Esophagus muscularis mucosa (tissue), 4 donors: ENCODE measurements at regions of chr5 and their contacts with region 1.

Region 1: DNA sequence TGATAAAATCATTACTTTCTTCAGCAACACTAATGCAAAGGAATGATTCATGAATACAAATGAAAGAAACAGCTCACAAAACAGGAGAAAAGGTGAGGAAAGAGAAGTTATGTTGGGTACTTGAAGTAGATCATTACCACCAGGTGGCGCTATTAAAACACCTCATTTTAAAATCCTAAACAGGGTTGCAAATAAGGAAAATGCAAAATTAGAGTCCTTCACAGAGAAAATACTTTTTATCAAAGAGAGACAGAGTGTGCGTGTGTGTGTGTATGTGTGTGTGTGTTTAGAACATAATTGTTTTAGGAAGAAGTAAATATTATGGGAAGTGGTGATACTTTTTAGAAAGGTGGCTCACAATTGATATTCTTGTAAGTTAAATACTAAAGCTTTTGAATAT is 49.5 kb upstream of the CD180 start:
- DNase-seq: no peak
- H3K4me3 ChIP-seq: no peak overlapping the region
- H3K27ac ChIP-seq: peak overlapping the region; percentile 40 to 83 (median 78)
- H3K4me1 ChIP-seq: peaks cover 27 to 68% (median 54%) of the 10 kb centered on the region in 4 donors
- H3K27me3 ChIP-seq: no peaks in the 10 kb centered on the region
- CTCF ChIP-seq: peak; percentile 68 to 81 (median 72)
- EP300 ChIP-seq: no peak
- POLR2A ChIP-seq: no peak

Region 2: DNA sequence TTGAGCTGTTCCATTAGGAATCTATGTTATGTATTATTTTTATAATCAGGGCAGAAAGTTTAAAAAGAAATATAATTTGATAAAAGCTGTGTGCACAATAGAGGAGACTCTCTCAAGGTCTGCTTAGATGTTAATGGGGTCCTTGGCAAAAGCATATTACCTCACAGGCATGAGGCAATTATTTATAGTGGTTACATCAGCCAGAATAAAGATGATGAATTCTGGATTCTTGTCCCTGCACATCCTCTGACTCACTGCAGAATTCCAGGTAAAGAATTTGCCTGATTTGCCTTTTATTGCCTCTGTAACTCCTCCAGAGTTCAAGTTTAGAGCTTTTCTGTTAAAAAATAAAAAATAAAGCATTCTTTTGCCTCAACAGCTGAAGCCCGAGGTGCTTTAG is 396.3 kb before region 1 on chr5:
- intact Hi-C with region 1: no loop called
- DNase-seq: no peak
- H3K4me3 ChIP-seq: no peak overlapping the region
- H3K27ac ChIP-seq: no peak overlapping the region
- H3K4me1 ChIP-seq: peaks cover 0 to 11% (median 0%) of the 10 kb centered on the region in 4 donors
- H3K27me3 ChIP-seq: no peaks in the 10 kb centered on the region
- CTCF ChIP-seq: no peak
- EP300 ChIP-seq: no peak
- POLR2A ChIP-seq: no peak

Region 3: DNA sequence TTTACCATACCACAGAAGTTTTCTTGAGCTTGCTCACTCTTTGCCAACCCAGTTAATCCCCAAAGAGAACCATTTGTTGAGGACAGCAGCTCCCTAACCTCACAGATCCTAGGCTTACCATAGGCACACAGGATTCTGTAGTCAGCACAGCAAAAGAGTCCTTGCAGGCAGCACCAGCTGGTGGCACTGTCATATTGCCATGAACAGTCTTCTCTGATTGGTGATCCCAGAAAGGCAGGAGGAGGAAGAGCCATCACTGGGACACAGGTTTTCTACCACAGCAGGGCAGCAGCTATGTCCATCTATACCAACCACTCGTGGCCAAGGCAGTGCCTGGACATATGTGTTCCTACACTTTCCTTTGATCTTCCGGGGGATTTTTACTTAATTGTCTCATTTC is 247.6 kb after region 1 on chr5:
- intact Hi-C with region 1: loop called (anchors 10 kb)
- DNase-seq: no peak
- H3K4me3 ChIP-seq: no peak overlapping the region
- H3K27ac ChIP-seq: peak overlapping the region in 2 of 4 donors; percentile 56
- H3K4me1 ChIP-seq: peaks cover 12 to 62% (median 42%) of the 10 kb centered on the region in 4 donors
- H3K27me3 ChIP-seq: no peaks in the 10 kb centered on the region
- CTCF ChIP-seq: peak in 1 of 3 experiments; percentile 28
- EP300 ChIP-seq: no peak
- POLR2A ChIP-seq: no peak

Region 4: DNA sequence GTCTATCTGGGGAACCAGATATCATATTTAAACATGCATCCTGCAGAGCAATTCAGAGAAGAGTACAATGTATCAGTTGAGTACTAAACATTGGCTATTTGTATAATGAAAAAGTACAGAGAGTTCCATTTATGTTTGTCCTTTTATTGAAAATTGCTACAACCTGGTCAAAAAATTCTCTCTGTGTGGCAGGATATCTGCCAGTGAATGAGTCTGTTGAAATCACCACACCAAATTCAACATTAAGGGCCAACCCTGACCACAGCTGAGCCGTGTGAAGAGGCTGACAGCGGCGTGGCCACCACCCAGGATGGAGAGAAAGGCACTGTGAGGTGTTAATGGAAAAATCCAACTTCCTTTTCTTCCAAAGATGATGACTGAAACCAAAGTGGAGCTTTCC is 546.8 kb after region 1 on chr5:
- intact Hi-C with region 1: loop called (anchors 5 kb)
- DNase-seq: no peak
- H3K4me3 ChIP-seq: no peak overlapping the region
- H3K27ac ChIP-seq: peak overlapping the region; percentile 15 to 46 (median 42)
- H3K4me1 ChIP-seq: peaks cover 0 to 44% (median 18%) of the 10 kb centered on the region in 4 donors
- H3K27me3 ChIP-seq: peaks cover 0 to 3% (median 0%) of the 10 kb centered on the region in 4 donors
- CTCF ChIP-seq: no peak
- EP300 ChIP-seq: no peak
- POLR2A ChIP-seq: no peak

Region 5: DNA sequence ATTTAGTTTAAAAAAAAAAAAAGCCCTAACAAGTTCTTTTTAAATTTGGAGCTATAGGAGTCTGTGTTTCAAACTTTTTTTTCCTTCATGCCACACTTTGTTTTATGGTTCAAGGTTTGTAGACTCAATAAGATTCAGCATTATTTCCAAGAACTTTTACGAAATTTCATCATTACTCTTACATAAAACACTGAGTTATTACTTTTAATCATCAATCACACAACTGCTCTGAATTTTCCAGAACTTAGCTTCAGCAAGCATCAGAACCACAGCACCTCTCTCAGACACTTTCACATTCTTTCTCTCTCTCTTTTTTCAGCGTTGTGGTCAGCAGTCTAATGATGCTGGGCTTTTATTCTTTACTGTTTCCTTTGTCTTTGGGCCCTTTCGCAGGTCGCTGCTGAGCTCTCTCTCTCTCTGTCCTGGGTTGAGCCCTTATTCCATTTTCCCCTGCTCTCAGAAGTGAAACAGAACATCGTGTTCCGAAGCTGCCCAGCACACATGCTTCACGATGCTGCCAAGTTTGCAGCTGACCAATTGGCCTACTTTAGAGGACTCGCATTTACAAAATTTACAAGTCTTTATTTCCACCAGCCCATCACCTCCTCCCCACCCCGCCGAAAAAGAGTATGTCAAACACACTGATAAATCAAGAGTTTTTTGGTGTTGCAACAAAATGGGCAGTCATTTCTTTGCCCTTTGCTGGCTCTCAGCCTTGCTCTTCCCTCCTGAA is 924.9 kb after region 1 on chr5:
- intact Hi-C with region 1: loop called (anchors 5 kb)
- DNase-seq: peak; percentile 96
- H3K4me3 ChIP-seq: peak overlapping the region; percentile 6 to 32 (median 13)
- H3K27ac ChIP-seq: peak overlapping the region; percentile 82 to 89 (median 87)
- H3K4me1 ChIP-seq: peaks cover 26 to 43% (median 38%) of the 10 kb centered on the region in 4 donors
- H3K27me3 ChIP-seq: no peaks in the 10 kb centered on the region
- CTCF ChIP-seq: no peak
- EP300 ChIP-seq: peak; percentile 96
- POLR2A ChIP-seq: peak; percentile 12

Region 6: DNA sequence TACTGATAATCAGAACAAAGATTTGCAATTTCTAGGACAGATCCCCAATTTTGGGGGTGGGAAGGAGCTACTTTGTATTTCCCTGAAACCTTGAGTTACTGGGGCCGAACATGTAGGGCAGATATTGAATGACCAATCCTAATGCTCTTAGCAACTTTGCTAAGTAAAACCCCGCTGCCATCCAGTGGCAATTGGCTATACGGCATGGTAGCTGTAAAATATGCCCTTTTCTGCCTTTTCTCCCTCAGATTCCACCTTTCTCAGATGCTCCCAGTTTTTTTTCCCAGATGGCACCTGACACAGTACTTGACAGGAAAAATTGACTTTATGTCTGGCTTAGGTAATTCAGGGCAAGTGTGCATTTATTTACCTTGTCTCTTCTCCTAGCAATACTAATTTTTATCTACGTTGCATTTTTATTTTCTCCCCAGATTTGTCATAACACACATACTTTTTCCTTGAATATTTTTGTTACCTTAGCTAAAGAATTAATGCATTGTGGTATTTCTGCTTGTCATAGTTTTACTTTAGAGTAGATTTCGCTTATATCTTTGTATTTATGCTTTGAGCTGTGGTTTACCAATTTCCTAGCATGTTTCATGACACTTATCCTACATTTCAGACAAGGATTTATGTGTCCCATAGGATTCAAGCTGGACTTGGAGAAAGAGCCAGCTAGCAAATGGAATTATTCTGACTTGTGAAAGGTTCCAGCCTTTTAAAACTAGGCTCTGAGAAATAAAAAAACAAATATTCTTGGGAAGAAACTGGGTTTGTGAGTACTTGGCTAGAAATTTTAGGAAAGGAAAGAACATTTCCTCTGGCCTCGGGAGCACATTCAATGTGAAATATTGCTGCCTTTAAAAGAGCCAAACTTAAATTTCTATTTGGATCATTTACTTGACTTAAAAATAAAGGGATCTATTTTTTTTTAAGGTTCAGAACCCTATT is 1006.8 kb after region 1 on chr5:
- intact Hi-C with region 1: loop called (anchors 10 kb)
- DNase-seq: no peak
- H3K4me3 ChIP-seq: peak overlapping the region; percentile 33 to 45 (median 42)
- H3K27ac ChIP-seq: peak overlapping the region; percentile 74 to 82 (median 78)
- H3K4me1 ChIP-seq: peaks cover 87 to 100% (median 100%) of the 10 kb centered on the region in 4 donors
- H3K27me3 ChIP-seq: no peaks in the 10 kb centered on the region
- CTCF ChIP-seq: peak; percentile 68 to 77 (median 74)
- EP300 ChIP-seq: no peak
- POLR2A ChIP-seq: no peak

Region 7: DNA sequence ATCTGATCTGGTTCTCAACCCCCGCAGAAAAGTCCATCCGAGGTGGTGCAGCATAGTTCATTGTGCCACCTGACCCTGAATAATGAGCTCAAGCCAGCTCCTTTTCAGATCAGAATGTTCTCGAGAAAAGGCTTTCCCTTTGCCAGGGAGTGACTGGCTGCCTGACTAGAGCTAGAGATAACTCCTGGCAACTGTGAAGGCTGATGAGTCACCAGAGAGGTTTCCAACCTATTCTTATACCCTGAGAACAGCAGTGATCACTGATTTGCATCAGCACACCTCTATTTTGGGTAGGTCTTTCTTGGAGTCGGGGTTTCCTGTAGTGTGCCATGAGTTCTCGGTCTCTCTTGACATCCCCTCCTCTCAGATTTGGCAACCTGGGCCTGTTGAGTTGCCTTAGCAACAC is 1097.3 kb after region 1 on chr5:
- intact Hi-C with region 1: no loop called
- DNase-seq: no peak
- H3K4me3 ChIP-seq: no peak overlapping the region
- H3K27ac ChIP-seq: peak overlapping the region; percentile 38 to 65 (median 62)
- H3K4me1 ChIP-seq: peaks cover 9 to 24% (median 20%) of the 10 kb centered on the region in 4 donors
- H3K27me3 ChIP-seq: no peaks in the 10 kb centered on the region
- CTCF ChIP-seq: no peak
- EP300 ChIP-seq: no peak
- POLR2A ChIP-seq: no peak